Prostate gland (tissue), 2 donors: ENCODE measurements at regions of chr16 and their contacts with region 1.

Region 1: GRCh38 chr16:56600398-56600999 is 7.9 kb upstream of the MT2A start:
- DNase-seq: peak; percentile 47
- H3K4me3 ChIP-seq: no peak overlapping the region
- H3K27ac ChIP-seq: no peak overlapping the region
- H3K4me1 ChIP-seq: no peaks in the 10 kb centered on the region
- H3K27me3 ChIP-seq: no peaks in the 10 kb centered on the region
- CTCF ChIP-seq: peak; percentile 44 to 74 (median 65)
- POLR2A ChIP-seq: no peak

Region 2: DNA sequence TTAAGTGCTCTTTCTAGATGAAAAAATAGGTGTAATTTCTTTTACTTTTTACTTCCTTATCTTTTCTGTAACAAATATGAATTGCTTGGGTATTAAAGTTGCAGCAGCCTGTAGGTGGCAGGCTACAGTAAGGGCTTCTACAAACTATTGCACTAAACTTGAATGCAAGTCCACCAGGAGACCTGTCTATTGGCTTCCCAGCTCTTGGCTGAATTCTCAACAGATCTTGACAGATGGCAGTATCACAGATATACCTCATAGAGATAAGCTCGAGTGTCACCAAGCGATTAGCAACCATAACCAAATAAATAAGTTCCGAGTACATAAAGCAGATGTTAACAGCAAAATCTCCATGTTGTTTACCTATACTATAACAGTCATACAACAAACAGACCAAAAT is 86.5 kb before region 1 on chr16:
- intact Hi-C with region 1: loop called (anchors 2 kb)
- DNase-seq: peak; percentile 66
- H3K4me3 ChIP-seq: no peak overlapping the region
- H3K27ac ChIP-seq: no peak overlapping the region
- H3K4me1 ChIP-seq: no peaks in the 10 kb centered on the region
- H3K27me3 ChIP-seq: no peaks in the 10 kb centered on the region
- CTCF ChIP-seq: peak; percentile 40 to 84 (median 70)
- POLR2A ChIP-seq: no peak